ENCODE measurements at regions of chr16 and their contacts with region 1.

Region 1: GRCh38 chr16:24543949-24544348 is 4.6 kb downstream of the RBBP6 start:
- DNase-seq: no peak
- H3K4me3 Mint-ChIP-seq: peak overlapping the region; percentile 27
- H3K27ac Mint-ChIP-seq: peak overlapping the region; percentile 25
- H3K4me1 Mint-ChIP-seq: peaks cover 51% of the 10 kb centered on the region
- H3K27me3 Mint-ChIP-seq: no peaks in the 10 kb centered on the region

Region 2: GRCh38 chr16:23615805-23616204 is 928.1 kb before region 1 on chr16:
- CTCF ChIA-PET with region 1: no interaction called
- POLR2A ChIA-PET with region 1: interaction called, 12 read pairs
- DNase-seq: no peak
- H3K4me3 Mint-ChIP-seq: no peak overlapping the region
- H3K27ac Mint-ChIP-seq: no peak overlapping the region
- H3K4me1 Mint-ChIP-seq: no peaks in the 10 kb centered on the region
- H3K27me3 Mint-ChIP-seq: no peaks in the 10 kb centered on the region

Region 3: DNA sequence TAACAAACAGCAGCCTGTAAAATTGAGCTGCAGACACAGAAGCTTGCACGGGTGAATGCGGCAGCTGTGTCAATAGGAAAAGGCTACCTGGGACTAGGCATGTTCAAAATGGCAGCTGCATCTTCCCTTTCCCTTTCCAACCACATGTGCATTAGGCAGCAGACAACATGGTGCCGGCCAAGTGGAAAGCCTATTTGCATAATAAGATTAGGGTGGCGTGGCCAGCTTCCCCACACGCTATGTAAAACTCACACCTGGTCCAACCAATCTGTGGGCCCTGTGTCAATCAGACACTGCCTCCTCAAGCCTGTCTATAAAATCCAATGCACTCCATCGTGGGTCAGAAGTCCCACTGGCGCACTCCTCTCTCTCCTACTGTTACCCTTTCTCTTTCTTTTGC is 65.5 kb before region 1 on chr16:
- CTCF ChIA-PET with region 1: no interaction called
- POLR2A ChIA-PET with region 1: no interaction called
- DNase-seq: no peak
- H3K4me3 Mint-ChIP-seq: no peak overlapping the region
- H3K27ac Mint-ChIP-seq: no peak overlapping the region
- H3K4me1 Mint-ChIP-seq: no peaks in the 10 kb centered on the region
- H3K27me3 Mint-ChIP-seq: no peaks in the 10 kb centered on the region

Measured in activated CD4-positive, alpha-beta T cell treated with anti-CD3 and anti-CD28 coated beads, Interleukin-2, amount 10 ng/mL, durations not matched to agents 7 days and 5 days (primary cell).